Thyroid gland (tissue), 4 donors: ENCODE measurements at regions of chr3 and their contacts with region 1.

Region 1: DNA sequence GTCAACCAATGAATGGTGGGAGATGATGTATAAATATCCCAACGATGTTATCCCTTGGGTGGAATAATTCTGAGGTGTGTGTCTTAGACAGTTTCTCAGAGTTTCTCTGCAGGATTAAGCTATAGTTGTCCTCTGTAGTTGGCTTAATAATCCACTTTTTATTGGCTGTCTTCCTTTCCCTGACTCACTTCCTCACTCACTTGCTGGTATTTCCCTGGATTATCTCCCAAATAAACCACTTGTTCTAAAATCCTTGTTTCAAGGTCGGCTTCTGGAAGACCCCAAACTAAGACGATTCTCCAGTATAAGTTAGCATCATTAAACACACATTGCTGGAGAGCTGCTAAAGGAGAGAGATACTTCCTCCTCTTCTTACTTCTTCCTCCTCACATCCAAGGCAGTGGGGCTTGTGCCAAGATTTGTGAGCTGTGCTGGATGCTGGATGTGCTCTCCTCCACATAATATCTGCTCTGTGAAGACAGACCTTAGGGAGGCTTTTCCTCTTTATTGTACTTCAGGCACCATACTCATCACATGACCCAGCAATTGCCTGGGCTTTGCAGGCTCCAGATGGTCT is 22.5 kb upstream of the ROPN1 start:
- DNase-seq: no peak
- H3K4me3 ChIP-seq: no peak overlapping the region
- H3K27ac ChIP-seq: no peak overlapping the region
- H3K4me1 ChIP-seq: no peaks in the 10 kb centered on the region
- H3K27me3 ChIP-seq: no peaks in the 10 kb centered on the region
- CTCF ChIP-seq: no peak
- POLR2A ChIP-seq: no peak

Region 2: DNA sequence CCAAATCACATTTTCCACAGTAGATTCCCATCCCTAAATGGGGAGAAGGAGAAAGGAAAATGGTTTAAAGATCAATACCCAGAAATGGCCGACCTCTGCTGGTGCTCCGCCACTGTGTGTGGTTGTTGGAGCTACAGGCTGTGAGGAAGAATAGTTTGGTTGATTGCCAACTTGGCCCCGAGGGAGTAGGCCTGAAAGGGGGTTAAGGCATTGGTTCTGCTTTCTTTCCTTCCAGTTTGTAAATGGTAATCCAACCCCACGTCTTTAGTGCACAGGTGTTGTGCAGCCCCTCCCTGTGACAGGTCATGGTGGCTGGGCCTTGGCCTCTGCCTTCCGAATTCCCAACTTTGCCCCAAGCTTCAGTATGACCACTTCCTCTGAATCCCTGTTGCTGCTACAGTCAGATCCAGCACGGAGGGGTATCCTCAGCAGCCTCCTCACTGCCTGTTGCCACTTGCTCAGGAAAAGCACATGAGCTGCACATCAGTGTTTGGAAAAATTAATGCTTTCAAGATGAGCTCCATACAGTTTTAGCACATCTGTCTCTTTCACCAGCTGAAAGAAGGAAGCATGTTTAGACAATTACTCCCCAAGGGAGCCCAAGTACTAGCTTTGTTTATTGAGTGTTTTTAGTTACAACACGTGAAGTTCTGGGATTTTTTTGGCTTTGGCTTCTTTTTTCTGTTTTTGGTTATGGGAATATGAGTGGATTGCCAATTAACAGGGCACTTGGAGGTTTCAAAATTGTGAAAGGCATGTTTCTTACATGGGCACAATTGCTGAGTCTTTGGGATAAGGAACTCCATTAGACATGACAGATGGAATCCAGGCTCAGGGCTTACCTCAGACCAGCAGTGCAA is 69.8 kb after region 1 on chr3:
- intact Hi-C with region 1: loop called (anchors 5 kb)
- DNase-seq: no peak
- H3K4me3 ChIP-seq: no peak overlapping the region
- H3K27ac ChIP-seq: no peak overlapping the region
- H3K4me1 ChIP-seq: peaks cover 0 to 11% of the 10 kb centered on the region in 2 donors
- H3K27me3 ChIP-seq: no peaks in the 10 kb centered on the region
- CTCF ChIP-seq: no peak
- POLR2A ChIP-seq: no peak

Region 3: GRCh38 chr3:124281453-124282316 is 267.2 kb after region 1 on chr3:
- intact Hi-C with region 1: loop called (anchors 10 kb)
- DNase-seq: peak in 1 of 2 donors; percentile 26
- H3K4me3 ChIP-seq: no peak overlapping the region
- H3K27ac ChIP-seq: no peak overlapping the region
- H3K4me1 ChIP-seq: peaks cover 0 to 12% of the 10 kb centered on the region in 2 donors
- H3K27me3 ChIP-seq: no peaks in the 10 kb centered on the region
- CTCF ChIP-seq: peak in 4 of 6 experiments; percentile 34 to 62 (median 48)
- POLR2A ChIP-seq: no peak